PC-3 (cell line): ENCODE measurements at regions of chr1 and their contacts with region 1.

Region 1: GRCh38 chr1:212035123-212035834 is at the starts of genes DTL and INTS7:
- DNase-seq: peak; percentile 100
- ATAC-seq: peak; percentile 75
- H3K4me3 ChIP-seq: peak within 1 kb of the TSS; percentile 88
- H3K27ac ChIP-seq: peak within 1 kb of the TSS; percentile 80
- H3K4me1 ChIP-seq: peaks cover 61% of the 10 kb centered on the region
- H3K27me3 ChIP-seq: no peaks in the 10 kb centered on the region
- CTCF ChIP-seq: peak; percentile 98
- total RNA-seq, gene DTL: 57.9 and 65.0 TPM in 2 replicates
- total RNA-seq, gene INTS7: 25.3 and 28.3 TPM in 2 replicates

Region 2: GRCh38 chr1:211680752-211681327 is 354.4 kb before region 1 on chr1:
- CTCF ChIA-PET with region 1: interaction called, 32 read pairs
- POLR2A ChIA-PET with region 1: no interaction called
- intact Hi-C with region 1: loop called (anchors 1 kb)
- DNase-seq: peak; percentile 94
- ATAC-seq: peak; percentile 90
- H3K4me3 ChIP-seq: no peak overlapping the region
- H3K27ac ChIP-seq: no peak overlapping the region
- H3K4me1 ChIP-seq: peaks cover 7% of the 10 kb centered on the region; the same call in 1 of the 2 replicates
- H3K27me3 ChIP-seq: no peaks in the 10 kb centered on the region
- CTCF ChIP-seq: peak; percentile 91

Region 3: DNA sequence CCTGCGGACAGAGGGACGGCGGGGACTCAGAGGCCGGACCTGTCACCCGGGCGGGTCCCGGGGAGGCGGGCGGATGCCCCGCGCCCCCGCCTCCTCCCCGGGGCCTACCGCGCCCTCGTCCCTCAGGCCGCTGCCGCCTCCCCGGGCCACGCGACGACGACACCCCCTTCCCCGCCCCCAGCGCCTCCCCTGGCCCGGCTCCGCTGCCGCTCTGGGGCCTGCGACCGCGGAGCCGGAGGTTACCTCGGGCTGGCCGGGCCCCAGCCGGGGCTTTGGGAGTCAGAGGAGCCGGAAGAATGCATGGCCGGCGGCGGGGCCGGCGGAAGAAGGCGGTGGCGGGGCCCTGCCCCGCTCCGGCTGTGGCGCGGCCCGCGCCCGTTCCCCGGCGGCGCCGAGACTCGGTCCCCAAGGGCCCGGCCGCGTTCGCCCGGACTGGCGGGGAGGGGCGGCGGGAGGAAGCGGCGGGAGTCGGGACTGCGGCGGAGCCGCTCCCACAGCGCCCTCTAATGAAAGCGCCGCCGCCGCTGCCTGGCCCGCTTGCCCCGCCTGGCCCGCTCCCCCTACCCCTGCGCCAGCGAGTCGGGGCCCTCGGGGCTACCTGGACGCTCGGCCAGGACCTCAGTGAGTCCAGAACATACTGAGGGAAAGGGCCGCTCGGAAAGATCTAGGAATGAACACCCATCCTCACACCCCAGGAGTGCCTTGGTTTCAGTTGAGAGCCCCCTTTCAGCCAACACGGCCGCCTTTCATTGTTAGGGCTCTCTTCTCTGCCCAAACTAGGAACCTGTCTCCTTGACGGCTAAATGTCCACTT is 204.7 kb before region 1 on chr1 and contains the start of gene LPGAT1:
- CTCF ChIA-PET with region 1: no interaction called
- POLR2A ChIA-PET with region 1: no interaction called
- intact Hi-C with region 1: loop called (anchors 5 kb)
- DNase-seq: peak; percentile 79
- ATAC-seq: peak; percentile 91
- H3K4me3 ChIP-seq: peak within 1 kb of the TSS; percentile 84
- H3K27ac ChIP-seq: no peak within 1 kb of the TSS
- H3K4me1 ChIP-seq: peaks cover 13% of the 10 kb centered on the region; the same call in 1 of the 2 replicates
- H3K27me3 ChIP-seq: no peaks in the 10 kb centered on the region
- CTCF ChIP-seq: peak; percentile 69
- total RNA-seq, gene LPGAT1: 39.8 and 41.7 TPM in 2 replicates

Region 4: DNA sequence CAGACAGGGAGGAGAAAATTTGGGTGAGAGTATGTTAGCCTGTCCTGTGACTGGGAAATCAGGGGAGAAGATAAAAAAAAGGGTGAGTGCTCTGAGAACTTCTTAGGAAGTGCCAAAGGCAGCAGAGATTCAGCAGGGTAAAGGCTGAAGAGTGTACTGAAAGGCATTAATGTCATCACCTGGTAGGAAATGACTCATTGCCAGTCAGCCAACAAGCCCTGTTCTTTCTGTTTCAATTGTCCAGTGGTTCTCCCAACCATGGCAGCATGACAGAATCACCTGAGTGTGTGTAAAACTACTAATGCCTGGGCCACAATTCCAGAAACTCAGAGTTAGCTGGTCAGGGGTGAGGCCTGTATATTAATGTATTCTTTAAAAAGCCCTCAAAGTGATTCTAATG is 83.4 kb before region 1 on chr1:
- CTCF ChIA-PET with region 1: interaction called, 6 read pairs
- POLR2A ChIA-PET with region 1: no interaction called
- intact Hi-C with region 1: loop called (anchors 2 kb)
- DNase-seq: peak; percentile 98
- ATAC-seq: peak; percentile 100
- H3K4me3 ChIP-seq: no peak overlapping the region
- H3K27ac ChIP-seq: peak overlapping the region; percentile 75
- H3K4me1 ChIP-seq: peaks cover 17% of the 10 kb centered on the region
- H3K27me3 ChIP-seq: no peaks in the 10 kb centered on the region
- CTCF ChIP-seq: no peak

Region 5: DNA sequence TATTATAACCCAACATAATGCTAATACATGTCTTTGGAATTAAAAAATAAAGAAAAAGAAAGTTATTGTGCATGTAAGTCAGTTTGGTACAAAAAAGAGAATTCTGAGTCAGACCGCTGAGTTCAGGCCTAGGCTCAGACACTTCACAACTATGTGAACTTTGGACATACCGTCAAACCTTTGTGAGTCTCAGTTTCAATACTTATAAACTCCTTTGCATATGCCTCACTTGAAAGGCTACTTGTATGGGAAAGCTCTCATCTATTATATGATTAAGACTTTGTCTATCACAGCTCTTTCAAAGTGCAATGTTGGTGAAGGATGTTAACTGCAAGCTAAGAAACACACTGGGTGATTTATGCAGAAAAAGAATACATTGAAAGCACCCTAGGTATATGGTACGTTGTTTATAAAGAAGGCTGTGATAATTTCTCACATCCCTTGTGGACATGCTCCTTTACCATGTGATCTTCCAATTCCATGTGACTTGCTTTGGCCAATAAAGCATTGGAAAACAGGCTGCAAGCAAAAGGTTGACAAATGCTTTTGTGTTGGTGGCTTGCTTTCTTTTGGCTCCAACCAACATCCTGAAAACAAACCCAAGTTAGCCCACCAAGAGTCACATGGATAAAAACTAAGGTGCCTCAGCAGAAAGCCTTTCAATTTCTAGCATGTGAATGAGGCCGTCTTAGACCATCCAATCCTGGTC is 49.6 kb before region 1 on chr1:
- CTCF ChIA-PET with region 1: no interaction called
- POLR2A ChIA-PET with region 1: no interaction called
- intact Hi-C with region 1: no loop called
- DNase-seq: no peak
- ATAC-seq: no peak
- H3K4me3 ChIP-seq: no peak overlapping the region
- H3K27ac ChIP-seq: no peak overlapping the region
- H3K4me1 ChIP-seq: no peaks in the 10 kb centered on the region
- H3K27me3 ChIP-seq: no peaks in the 10 kb centered on the region
- CTCF ChIP-seq: no peak

Region 6: GRCh38 chr1:212432706-212433576 is 397.7 kb after region 1 on chr1 and contains the start of gene NENF:
- CTCF ChIA-PET with region 1: interaction called, 5 read pairs
- POLR2A ChIA-PET with region 1: interaction called, 4 read pairs
- intact Hi-C with region 1: loop called (anchors 2 kb)
- DNase-seq: peak; percentile 98
- ATAC-seq: peak; percentile 99
- H3K4me3 ChIP-seq: peak within 1 kb of the TSS; percentile 76
- H3K27ac ChIP-seq: no peak within 1 kb of the TSS
- H3K4me1 ChIP-seq: peaks cover 23% of the 10 kb centered on the region
- H3K27me3 ChIP-seq: no peaks in the 10 kb centered on the region
- CTCF ChIP-seq: no peak
- total RNA-seq, gene NENF: 153 and 161 TPM in 2 replicates